Right lobe of liver (tissue), 6 donors: ENCODE measurements at regions of chr9 and their contacts with region 1.

Region 1: DNA sequence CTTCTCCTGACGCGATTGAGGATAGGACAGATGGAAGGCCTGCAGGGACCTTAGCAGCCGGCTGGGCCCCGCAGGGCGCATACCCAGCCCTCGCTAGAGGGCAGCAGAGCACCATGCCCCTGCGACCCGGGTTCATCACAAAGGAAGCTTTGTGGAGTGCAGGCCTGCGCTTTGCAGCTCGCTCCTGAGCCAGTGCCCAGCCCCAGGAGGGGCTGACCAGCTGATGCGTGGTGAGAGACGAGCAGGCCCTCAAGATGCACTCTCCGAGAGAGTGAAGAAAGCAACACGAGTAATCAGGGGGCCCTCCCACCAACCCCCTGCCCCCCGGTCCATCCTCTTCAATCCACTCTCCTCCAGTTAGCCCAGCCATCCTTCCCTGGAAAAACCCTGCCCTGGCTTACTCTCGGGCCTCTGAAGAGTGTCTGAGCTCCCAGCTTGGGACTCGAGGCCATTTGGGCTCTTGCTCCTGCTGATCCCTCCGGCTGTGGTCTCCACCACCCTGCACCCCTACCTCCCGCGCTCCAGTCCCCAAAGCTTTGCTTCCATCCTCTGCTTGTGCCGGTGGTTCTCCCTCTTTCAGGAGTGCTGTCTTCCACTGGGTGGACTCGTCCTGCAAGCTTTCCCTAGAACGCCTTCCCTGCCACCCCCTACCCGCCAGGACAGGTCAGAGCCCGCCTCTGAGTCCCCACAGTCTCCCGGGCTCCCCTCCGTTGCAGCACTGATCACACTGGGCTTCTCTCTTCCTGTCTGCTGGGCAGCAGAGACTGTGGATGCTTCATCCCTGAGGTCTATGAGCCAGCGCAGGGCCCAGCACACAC is 9.1 kb upstream of the KIF12 start:
- DNase-seq: peak; percentile 81 to 85 (median 83)
- ATAC-seq: peak; percentile 100
- H3K4me3 ChIP-seq: no peak overlapping the region
- H3K27ac ChIP-seq: no peak overlapping the region
- H3K4me1 ChIP-seq: no peaks in the 10 kb centered on the region
- H3K27me3 ChIP-seq: no peaks in the 10 kb centered on the region
- CTCF ChIP-seq: peak; percentile 96 to 100 (median 98)
- POLR2A ChIP-seq: no peak

Region 2: DNA sequence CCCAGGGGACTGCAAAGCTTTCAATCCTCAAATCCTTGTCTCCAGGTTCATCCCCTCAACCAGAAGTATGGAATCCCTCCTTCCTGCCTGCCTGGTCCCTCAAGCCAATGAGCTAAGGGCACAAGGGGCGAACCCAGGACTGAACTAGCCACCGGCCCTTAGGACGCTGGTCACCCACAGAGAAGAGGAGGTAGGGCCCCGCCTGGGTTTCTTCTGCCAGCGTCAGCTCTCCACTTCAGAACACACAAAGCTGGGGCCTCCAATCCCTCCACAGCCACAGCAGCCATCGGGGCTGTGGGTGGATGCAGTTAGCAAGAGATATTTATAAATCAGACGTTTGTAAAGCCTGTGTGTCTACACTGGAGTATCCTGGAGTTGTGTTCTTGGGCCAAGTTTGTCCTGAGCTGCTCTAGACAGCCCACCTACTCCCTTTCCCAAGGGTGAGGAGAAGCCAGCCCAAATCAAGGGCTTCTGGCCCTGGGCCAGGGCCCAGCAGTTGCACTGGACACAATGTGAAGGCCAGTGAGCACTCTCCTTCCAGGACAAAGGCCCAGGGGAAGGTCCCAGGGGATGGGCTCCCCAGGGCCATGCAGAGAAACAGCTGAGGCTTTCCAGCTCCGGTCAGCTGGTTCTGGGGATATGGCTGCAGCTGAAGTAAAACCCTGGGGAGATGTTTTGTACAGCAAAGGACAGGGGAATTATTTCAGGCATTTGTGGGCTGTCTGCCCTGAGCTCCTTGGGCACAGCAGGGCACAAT is 49.0 kb before region 1 on chr9:
- intact Hi-C with region 1: no loop called
- DNase-seq: peak in 1 of 3 donors; percentile 63
- ATAC-seq: peak; percentile 29 to 68 (median 58)
- H3K4me3 ChIP-seq: no peak overlapping the region
- H3K27ac ChIP-seq: peak overlapping the region in 1 of 3 donors; percentile 49
- H3K4me1 ChIP-seq: peaks cover 0 to 6% (median 0%) of the 10 kb centered on the region in 4 donors
- H3K27me3 ChIP-seq: no peaks in the 10 kb centered on the region
- CTCF ChIP-seq: no peak
- POLR2A ChIP-seq: no peak

Region 3: GRCh38 chr9:114155263-114155972 is 47.2 kb after region 1 on chr9 and contains the start of gene COL27A1:
- intact Hi-C with region 1: loop called in 1 of 2 experiments (anchors 5 kb)
- DNase-seq: peak; percentile 87 to 90 (median 87)
- ATAC-seq: peak; percentile 82 to 85 (median 84)
- H3K4me3 ChIP-seq: peak within 1 kb of the TSS; percentile 60 to 70 (median 67)
- H3K27ac ChIP-seq: peak within 1 kb of the TSS; percentile 67 to 87 (median 85)
- H3K4me1 ChIP-seq: peaks cover 0 to 35% (median 4%) of the 10 kb centered on the region in 4 donors
- H3K27me3 ChIP-seq: no peaks in the 10 kb centered on the region
- CTCF ChIP-seq: peak; percentile 94 to 96 (median 95)
- POLR2A ChIP-seq: peak; percentile 27
- total RNA-seq, gene COL27A1: 11.8 to 51.9 (median 29.3) TPM

Region 4: GRCh38 chr9:114174876-114175771 is 66.9 kb after region 1 on chr9:
- intact Hi-C with region 1: no loop called
- DNase-seq: peak; percentile 56 to 83 (median 72)
- ATAC-seq: peak; percentile 58 to 80 (median 72)
- H3K4me3 ChIP-seq: no peak overlapping the region
- H3K27ac ChIP-seq: peak overlapping the region; percentile 72 to 84 (median 80)
- H3K4me1 ChIP-seq: peaks cover 0 to 67% (median 36%) of the 10 kb centered on the region in 4 donors
- H3K27me3 ChIP-seq: no peaks in the 10 kb centered on the region
- CTCF ChIP-seq: peak in 1 of 4 donors; percentile 8
- POLR2A ChIP-seq: no peak

Region 5: GRCh38 chr9:114271641-114272081 is 163.4 kb after region 1 on chr9:
- intact Hi-C with region 1: loop called in 1 of 2 experiments (anchors 10 kb)
- DNase-seq: peak in 2 of 3 donors; percentile 56 to 58
- ATAC-seq: peak; percentile 48 to 65 (median 57)
- H3K4me3 ChIP-seq: no peak overlapping the region
- H3K27ac ChIP-seq: no peak overlapping the region
- H3K4me1 ChIP-seq: no peaks in the 10 kb centered on the region
- H3K27me3 ChIP-seq: no peaks in the 10 kb centered on the region
- CTCF ChIP-seq: peak; percentile 18 to 44 (median 39)
- POLR2A ChIP-seq: no peak

Region 6: GRCh38 chr9:114291064-114291474 is 182.8 kb after region 1 on chr9:
- intact Hi-C with region 1: loop called in 1 of 2 experiments (anchors 2 kb)
- DNase-seq: peak; percentile 64 to 76 (median 71)
- ATAC-seq: peak; percentile 66 to 85 (median 74)
- H3K4me3 ChIP-seq: no peak overlapping the region
- H3K27ac ChIP-seq: no peak overlapping the region
- H3K4me1 ChIP-seq: no peaks in the 10 kb centered on the region
- H3K27me3 ChIP-seq: no peaks in the 10 kb centered on the region
- CTCF ChIP-seq: peak; percentile 85 to 93 (median 90)
- POLR2A ChIP-seq: no peak